Naive thymus-derived CD4-positive, alpha-beta T cell (primary cell): ENCODE measurements at regions of chr11 and their contacts with region 1.

Region 1: GRCh38 chr11:94786264-94787126 is 18.3 kb downstream of the AMOTL1 start:
- DNase-seq: peak in 5 of 9 donors; percentile 18 to 52 (median 42)
- ATAC-seq: peak; percentile 63
- H3K4me3 ChIP-seq: no peak overlapping the region
- H3K4me3 Mint-ChIP-seq: no peak overlapping the region
- H3K27ac ChIP-seq: no peak overlapping the region
- H3K27ac Mint-ChIP-seq: no peak overlapping the region
- H3K4me1 ChIP-seq: no peaks in the 10 kb centered on the region
- H3K4me1 Mint-ChIP-seq: peaks cover 0 to 3% (median 0%) of the 10 kb centered on the region in 7 donors
- H3K27me3 ChIP-seq: no peaks in the 10 kb centered on the region
- H3K27me3 Mint-ChIP-seq: peaks cover 5 to 23% (median 9%) of the 10 kb centered on the region in 5 donors

Region 2: GRCh38 chr11:94705419-94705818 is 81.1 kb before region 1 on chr11:
- CTCF ChIA-PET with region 1: no interaction called
- POLR2A ChIA-PET with region 1: no interaction called
- intact Hi-C with region 1: no loop called
- DNase-seq: no peak
- ATAC-seq: no peak
- H3K4me3 ChIP-seq: no peak overlapping the region
- H3K4me3 Mint-ChIP-seq: no peak overlapping the region
- H3K27ac ChIP-seq: no peak overlapping the region
- H3K27ac Mint-ChIP-seq: no peak overlapping the region
- H3K4me1 ChIP-seq: no peaks in the 10 kb centered on the region
- H3K4me1 Mint-ChIP-seq: no peaks in the 10 kb centered on the region
- H3K27me3 ChIP-seq: no peaks in the 10 kb centered on the region
- H3K27me3 Mint-ChIP-seq: peaks cover 4 to 36% (median 21%) of the 10 kb centered on the region in 5 donors

Region 3: GRCh38 chr11:94876645-94877442 is 90.3 kb after region 1 on chr11:
- CTCF ChIA-PET with region 1: no interaction called
- POLR2A ChIA-PET with region 1: no interaction called
- intact Hi-C with region 1: loop called in 1 of 2 experiments (anchors 2 kb)
- DNase-seq: peak in 2 of 9 donors; percentile 7 to 75
- ATAC-seq: peak; percentile 84
- H3K4me3 ChIP-seq: no peak overlapping the region
- H3K4me3 Mint-ChIP-seq: peak overlapping the region in 1 of 10 donors; percentile 69
- H3K27ac ChIP-seq: no peak overlapping the region
- H3K27ac Mint-ChIP-seq: peak overlapping the region in 4 of 9 donors; percentile 28 to 67 (median 55)
- H3K4me1 ChIP-seq: no peaks in the 10 kb centered on the region
- H3K4me1 Mint-ChIP-seq: peaks cover 10 to 22% (median 16%) of the 10 kb centered on the region in 7 donors
- H3K27me3 ChIP-seq: peaks cover 0 to 4% of the 10 kb centered on the region in 2 donors
- H3K27me3 Mint-ChIP-seq: peaks cover 0 to 5% (median 0%) of the 10 kb centered on the region in 5 donors

Region 4: GRCh38 chr11:94897330-94897768 is 110.9 kb after region 1 on chr11:
- CTCF ChIA-PET with region 1: no interaction called
- POLR2A ChIA-PET with region 1: no interaction called
- intact Hi-C with region 1: loop called in 1 of 2 experiments (anchors 1 kb)
- DNase-seq: peak in 5 of 9 donors; percentile 14 to 34 (median 26)
- ATAC-seq: peak; percentile 63
- H3K4me3 ChIP-seq: no peak overlapping the region
- H3K4me3 Mint-ChIP-seq: no peak overlapping the region
- H3K27ac ChIP-seq: no peak overlapping the region
- H3K27ac Mint-ChIP-seq: no peak overlapping the region
- H3K4me1 ChIP-seq: no peaks in the 10 kb centered on the region
- H3K4me1 Mint-ChIP-seq: peaks cover 0 to 5% (median 0%) of the 10 kb centered on the region in 7 donors
- H3K27me3 ChIP-seq: no peaks in the 10 kb centered on the region
- H3K27me3 Mint-ChIP-seq: peaks cover 0 to 7% (median 0%) of the 10 kb centered on the region in 5 donors

Region 5: DNA sequence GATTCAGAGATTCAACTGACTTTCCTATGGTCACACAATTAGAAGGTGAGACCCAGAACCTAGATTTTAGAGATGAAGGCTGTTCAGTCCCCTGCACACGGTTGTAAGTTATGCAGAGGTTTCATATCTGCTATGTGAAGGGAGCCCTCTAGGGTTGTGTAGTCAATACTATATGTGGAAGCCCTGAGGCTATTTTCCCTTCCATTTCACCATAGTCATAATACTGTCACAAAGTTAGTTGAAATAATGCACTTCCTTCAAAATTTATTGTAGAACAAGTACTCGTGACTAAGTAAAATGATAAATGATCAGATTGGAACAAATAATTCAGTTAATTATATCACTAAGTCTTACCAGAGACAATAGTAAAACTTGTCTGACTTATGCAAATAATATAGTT is 352.0 kb after region 1 on chr11:
- CTCF ChIA-PET with region 1: no interaction called
- POLR2A ChIA-PET with region 1: no interaction called
- intact Hi-C with region 1: loop called in 1 of 2 experiments (anchors 1 kb)
- DNase-seq: no peak
- ATAC-seq: peak; percentile 57
- H3K4me3 ChIP-seq: no peak overlapping the region
- H3K4me3 Mint-ChIP-seq: no peak overlapping the region
- H3K27ac ChIP-seq: no peak overlapping the region
- H3K27ac Mint-ChIP-seq: no peak overlapping the region
- H3K4me1 ChIP-seq: no peaks in the 10 kb centered on the region
- H3K4me1 Mint-ChIP-seq: peaks cover 0 to 9% (median 0%) of the 10 kb centered on the region in 7 donors
- H3K27me3 ChIP-seq: no peaks in the 10 kb centered on the region
- H3K27me3 Mint-ChIP-seq: peaks cover 0 to 10% (median 6%) of the 10 kb centered on the region in 5 donors

Region 6: DNA sequence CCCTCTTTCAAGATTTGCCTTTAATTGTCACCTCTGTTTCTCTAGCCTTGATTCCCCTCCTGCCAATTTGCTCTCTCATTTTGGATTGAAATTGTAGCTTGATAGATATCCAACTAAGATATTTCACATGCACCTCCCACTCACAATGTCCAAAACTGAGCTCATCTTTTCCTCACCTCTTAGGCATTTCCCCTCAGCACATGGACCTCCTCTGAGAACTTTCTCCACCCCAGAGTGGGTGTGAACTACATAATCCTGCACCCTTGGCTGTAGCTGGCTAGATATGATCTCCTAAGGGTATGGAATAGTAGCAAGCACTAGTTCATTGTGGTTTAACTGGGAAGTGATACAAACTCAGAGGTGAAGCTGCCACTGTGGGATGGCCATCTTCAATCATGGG is 536.1 kb after region 1 on chr11:
- CTCF ChIA-PET with region 1: no interaction called
- POLR2A ChIA-PET with region 1: no interaction called
- intact Hi-C with region 1: no loop called
- DNase-seq: no peak
- ATAC-seq: no peak
- H3K4me3 ChIP-seq: no peak overlapping the region
- H3K4me3 Mint-ChIP-seq: no peak overlapping the region
- H3K27ac ChIP-seq: no peak overlapping the region
- H3K27ac Mint-ChIP-seq: peak overlapping the region in 1 of 9 donors; percentile 49
- H3K4me1 ChIP-seq: no peaks in the 10 kb centered on the region
- H3K4me1 Mint-ChIP-seq: peaks cover 0 to 9% (median 5%) of the 10 kb centered on the region in 7 donors
- H3K27me3 ChIP-seq: no peaks in the 10 kb centered on the region
- H3K27me3 Mint-ChIP-seq: peaks cover 0 to 4% (median 0%) of the 10 kb centered on the region in 5 donors

Region 7: DNA sequence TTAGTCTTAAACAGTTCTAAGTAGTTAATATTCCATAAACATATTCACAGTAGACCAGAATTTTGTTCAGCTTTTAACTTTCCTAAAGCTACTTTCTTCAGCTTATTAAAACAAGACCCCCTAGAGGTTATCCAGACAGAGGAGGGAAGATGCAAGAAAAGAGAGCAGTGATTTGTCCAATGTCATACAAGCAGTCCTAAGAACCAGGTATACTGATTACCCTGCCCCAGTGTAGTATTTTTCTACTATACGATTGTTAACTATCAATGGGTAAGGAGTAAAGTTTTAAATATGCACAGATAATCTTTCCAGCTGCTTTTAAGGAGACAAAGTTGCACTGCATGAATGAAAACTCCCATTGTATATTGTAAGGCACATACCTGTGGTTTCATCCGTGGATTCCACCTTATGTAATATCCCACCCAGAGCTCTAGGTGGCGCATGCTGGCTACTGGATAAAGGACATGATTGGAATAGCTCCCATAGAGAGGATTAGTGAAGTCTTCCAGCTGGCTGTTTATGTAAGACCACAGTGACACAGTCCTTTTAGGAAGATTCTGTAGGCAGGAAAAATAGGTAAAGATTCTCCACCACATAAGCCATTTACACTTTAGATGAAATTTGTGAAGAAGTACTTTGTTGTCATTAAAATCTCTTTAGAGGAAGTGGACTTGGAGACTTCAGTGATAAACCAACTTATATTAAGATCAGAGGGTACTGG is 1049.4 kb after region 1 on chr11:
- CTCF ChIA-PET with region 1: no interaction called
- POLR2A ChIA-PET with region 1: no interaction called
- intact Hi-C with region 1: loop called in 1 of 2 experiments (anchors 1 kb)
- DNase-seq: peak; percentile 17 to 67 (median 49)
- ATAC-seq: peak; percentile 96
- H3K4me3 ChIP-seq: no peak overlapping the region
- H3K4me3 Mint-ChIP-seq: no peak overlapping the region
- H3K27ac ChIP-seq: no peak overlapping the region
- H3K27ac Mint-ChIP-seq: peak overlapping the region in 4 of 9 donors; percentile 17 to 65 (median 28)
- H3K4me1 ChIP-seq: no peaks in the 10 kb centered on the region
- H3K4me1 Mint-ChIP-seq: peaks cover 0 to 5% (median 0%) of the 10 kb centered on the region in 7 donors
- H3K27me3 ChIP-seq: no peaks in the 10 kb centered on the region
- H3K27me3 Mint-ChIP-seq: no peaks in the 10 kb centered on the region

Region 8: DNA sequence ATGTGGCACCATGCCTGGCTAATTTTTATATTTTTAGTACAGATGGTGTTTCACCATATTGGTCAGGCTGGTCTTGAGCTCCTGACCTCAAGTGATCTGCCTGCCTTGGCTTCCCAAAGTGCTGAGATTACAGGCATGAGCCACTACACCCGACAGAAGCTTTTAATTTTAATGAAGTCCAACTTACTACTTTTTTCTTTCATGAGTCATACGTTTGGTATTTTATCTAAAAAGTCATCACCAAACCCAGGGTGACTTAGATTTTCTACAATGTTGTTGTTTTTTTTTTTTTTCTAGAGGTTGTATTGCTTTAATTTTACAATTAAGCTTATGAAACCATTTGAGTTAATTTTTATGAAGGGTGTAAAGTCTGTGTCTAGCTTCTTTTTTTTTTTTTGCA is 1638.2 kb after region 1 on chr11:
- CTCF ChIA-PET with region 1: no interaction called
- POLR2A ChIA-PET with region 1: no interaction called
- intact Hi-C with region 1: loop called in 1 of 2 experiments (anchors 1 kb)
- DNase-seq: no peak
- ATAC-seq: no peak
- H3K4me3 ChIP-seq: no peak overlapping the region
- H3K4me3 Mint-ChIP-seq: no peak overlapping the region
- H3K27ac ChIP-seq: no peak overlapping the region
- H3K27ac Mint-ChIP-seq: no peak overlapping the region
- H3K4me1 ChIP-seq: no peaks in the 10 kb centered on the region
- H3K4me1 Mint-ChIP-seq: peaks cover 0 to 6% (median 0%) of the 10 kb centered on the region in 7 donors
- H3K27me3 ChIP-seq: peaks cover 0 to 3% of the 10 kb centered on the region in 2 donors
- H3K27me3 Mint-ChIP-seq: peaks cover 27 to 49% (median 44%) of the 10 kb centered on the region in 5 donors